Transverse colon (tissue), 4 donors: ENCODE measurements at regions of chr3 and their contacts with region 1.

Region 1: DNA sequence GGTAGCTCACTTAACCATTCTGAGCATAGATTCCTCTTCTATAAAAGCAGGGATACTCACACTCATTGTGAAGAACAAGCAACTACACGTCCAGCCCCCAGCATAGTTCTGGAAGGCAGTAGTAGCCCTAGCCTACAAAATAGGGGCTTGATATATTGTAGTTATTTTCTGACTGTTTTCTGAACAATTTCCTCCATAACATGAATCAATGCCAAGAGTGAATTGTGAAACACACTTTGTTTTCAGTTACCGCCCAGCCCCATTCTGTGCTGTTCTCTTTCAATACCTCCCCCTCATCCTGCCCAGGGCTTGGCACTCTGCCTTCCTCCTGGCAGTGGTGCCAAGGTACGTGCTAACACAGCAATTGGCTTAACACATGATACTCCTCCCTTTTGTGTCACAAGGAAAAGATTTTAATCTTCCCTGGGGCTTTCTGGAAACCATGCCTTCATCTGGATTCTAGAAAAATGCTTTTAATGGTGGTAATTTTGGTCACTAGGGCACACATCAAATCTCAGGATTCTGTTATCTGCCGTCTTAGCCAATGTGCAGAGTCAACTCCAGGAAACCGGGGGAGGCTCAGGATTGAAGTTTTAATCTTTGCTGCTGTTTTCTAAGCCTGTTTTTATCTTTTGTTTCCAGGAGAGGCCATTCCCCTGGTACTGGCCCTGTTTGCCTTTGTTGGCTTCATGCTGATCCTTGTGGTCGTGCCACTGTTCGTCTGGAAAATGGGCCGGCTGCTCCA is 37.2 kb downstream of the IL20RB start:
- DNase-seq: peak; percentile 92
- H3K4me3 ChIP-seq: no peak overlapping the region
- H3K27ac ChIP-seq: peak overlapping the region; percentile 82 to 88 (median 85)
- H3K4me1 ChIP-seq: peaks cover 12 to 28% (median 19%) of the 10 kb centered on the region in 4 donors
- H3K27me3 ChIP-seq: no peaks in the 10 kb centered on the region
- CTCF ChIP-seq: no peak
- EP300 ChIP-seq: peak; percentile 3
- POLR2A ChIP-seq: no peak

Region 2: GRCh38 chr3:136861890-136862616 is 132.9 kb before region 1 on chr3 and contains the start of gene NCK1:
- in situ Hi-C with region 1: loop called in 1 of 4 experiments (anchors 25 kb)
- intact Hi-C with region 1: no loop called
- DNase-seq: peak; percentile 99
- H3K4me3 ChIP-seq: peak within 1 kb of the TSS; percentile 64 to 98 (median 68)
- H3K27ac ChIP-seq: peak within 1 kb of the TSS; percentile 88 to 99 (median 95)
- H3K4me1 ChIP-seq: peaks cover 11 to 20% (median 18%) of the 10 kb centered on the region in 4 donors
- H3K27me3 ChIP-seq: no peaks in the 10 kb centered on the region
- CTCF ChIP-seq: peak in 1 of 5 experiments; percentile 21
- EP300 ChIP-seq: no peak
- POLR2A ChIP-seq: peak; percentile 91
- total RNA-seq, gene NCK1: 0.80 to 71.4 (median 45.2) TPM